Activated CD8-positive, alpha-beta T cell treated with anti-CD3 and anti-CD28 coated beads for 36 hours (primary cell): ENCODE measurements at regions of chr11 and their contacts with region 1.

Region 1: DNA sequence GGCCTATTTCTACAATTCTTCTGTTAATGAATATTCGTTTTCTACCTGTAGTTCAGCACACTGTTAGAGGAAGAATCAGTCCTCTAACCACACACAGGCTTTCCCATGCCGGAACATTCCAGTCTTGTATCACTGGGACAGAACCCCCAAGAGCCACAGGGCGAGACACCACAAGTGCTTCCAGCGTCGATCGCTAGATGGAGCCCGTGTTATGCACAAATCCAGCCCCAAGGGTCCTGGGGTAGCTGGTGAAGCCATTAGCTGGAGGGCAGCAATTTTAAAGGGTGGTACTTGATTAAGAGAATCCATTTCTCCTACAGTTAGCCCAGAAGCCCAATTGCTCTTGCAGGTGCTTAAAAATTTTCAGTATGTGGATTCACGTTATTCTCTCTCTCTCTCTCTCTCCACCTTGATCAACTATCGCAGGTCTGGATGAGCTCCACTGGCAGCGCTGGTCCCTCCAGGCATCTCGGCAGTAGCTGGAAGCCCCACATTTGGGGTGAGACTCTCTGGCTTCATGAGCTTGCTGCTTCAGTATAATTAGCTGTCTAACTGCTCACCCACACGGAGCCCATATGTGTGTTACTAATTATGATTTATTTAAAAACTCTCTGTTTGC is 148.2 kb upstream of the SNX19 start:
- DNase-seq: peak; percentile 48
- ATAC-seq: peak; percentile 34
- H3K4me3 Mint-ChIP-seq: no peak overlapping the region
- H3K27ac Mint-ChIP-seq: no peak overlapping the region
- H3K4me1 Mint-ChIP-seq: no peaks in the 10 kb centered on the region
- H3K27me3 Mint-ChIP-seq: peaks cover 6% of the 10 kb centered on the region
- CTCF ChIP-seq: peak; percentile 70

Region 2: GRCh38 chr11:131025020-131025419 is 39.5 kb before region 1 on chr11:
- CTCF ChIA-PET with region 1: no interaction called
- POLR2A ChIA-PET with region 1: no interaction called
- intact Hi-C with region 1: no loop called
- DNase-seq: no peak
- ATAC-seq: no peak
- H3K4me3 Mint-ChIP-seq: no peak overlapping the region
- H3K27ac Mint-ChIP-seq: no peak overlapping the region
- H3K4me1 Mint-ChIP-seq: no peaks in the 10 kb centered on the region
- H3K27me3 Mint-ChIP-seq: no peaks in the 10 kb centered on the region
- CTCF ChIP-seq: no peak

Region 3: GRCh38 chr11:131511794-131512193 is 447.3 kb after region 1 on chr11:
- CTCF ChIA-PET with region 1: interaction called, 10 read pairs
- POLR2A ChIA-PET with region 1: no interaction called
- intact Hi-C with region 1: no loop called
- DNase-seq: peak; percentile 32
- ATAC-seq: no peak
- H3K4me3 Mint-ChIP-seq: no peak overlapping the region
- H3K27ac Mint-ChIP-seq: no peak overlapping the region
- H3K4me1 Mint-ChIP-seq: no peaks in the 10 kb centered on the region
- H3K27me3 Mint-ChIP-seq: no peaks in the 10 kb centered on the region
- CTCF ChIP-seq: no peak